RWPE1 (cell line): ENCODE measurements at regions of chr11 and their contacts with region 1.

Region 1: DNA sequence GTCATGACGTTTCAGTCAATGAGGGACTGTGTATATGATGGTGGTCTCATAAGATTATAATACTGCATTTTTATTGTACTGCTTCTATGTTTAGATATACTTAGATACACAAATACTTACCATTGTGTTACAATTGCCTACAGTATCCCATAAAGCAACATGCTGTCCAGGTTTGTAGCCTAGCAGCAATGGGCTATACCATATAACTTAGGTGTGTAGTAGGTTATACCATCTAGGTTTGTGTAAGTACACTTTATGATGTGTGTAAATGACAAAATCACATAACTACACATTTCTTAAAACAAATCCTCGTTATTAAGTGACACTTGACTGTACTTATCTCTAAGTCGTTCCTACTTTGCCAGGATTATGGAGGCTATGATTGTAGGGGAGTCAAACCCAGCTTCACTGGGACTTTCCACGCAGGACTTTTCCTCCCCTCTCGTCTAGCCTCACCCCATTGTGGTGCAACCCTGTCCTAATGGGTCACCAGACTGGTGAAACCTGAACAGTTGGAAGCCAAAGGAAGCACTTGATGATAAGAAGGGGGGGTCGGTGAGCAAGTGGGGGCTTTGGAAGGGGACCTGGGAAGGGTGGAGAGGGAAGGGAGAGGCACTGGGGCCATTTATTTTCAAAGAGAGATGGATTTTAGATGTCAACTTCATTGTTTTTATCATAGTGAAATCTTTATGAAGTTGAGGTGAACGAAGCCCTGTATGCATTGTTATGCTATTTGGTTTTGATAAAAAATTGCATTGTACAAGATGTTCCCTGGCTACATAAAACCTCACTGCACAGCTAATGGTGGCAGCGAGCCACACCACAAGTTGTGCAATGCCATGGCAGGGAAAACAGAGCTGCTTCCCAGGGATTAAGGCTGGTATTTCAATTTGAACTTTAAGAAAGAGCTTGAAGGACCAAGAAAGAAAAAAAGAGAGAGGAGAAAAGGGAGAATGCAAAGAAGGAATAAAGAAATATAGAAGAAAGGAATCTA is 129.1 kb downstream of the EHF start:
- DNase-seq: peak; percentile 74
- H3K27ac ChIP-seq: peak overlapping the region; percentile 97
- CTCF ChIP-seq: no peak

Region 2: GRCh38 chr11:34706709-34707461 is 43.1 kb before region 1 on chr11:
- CTCF ChIA-PET with region 1: no interaction called
- POLR2A ChIA-PET with region 1: no interaction called
- DNase-seq: no peak
- H3K27ac ChIP-seq: no peak overlapping the region
- CTCF ChIP-seq: no peak

Region 3: DNA sequence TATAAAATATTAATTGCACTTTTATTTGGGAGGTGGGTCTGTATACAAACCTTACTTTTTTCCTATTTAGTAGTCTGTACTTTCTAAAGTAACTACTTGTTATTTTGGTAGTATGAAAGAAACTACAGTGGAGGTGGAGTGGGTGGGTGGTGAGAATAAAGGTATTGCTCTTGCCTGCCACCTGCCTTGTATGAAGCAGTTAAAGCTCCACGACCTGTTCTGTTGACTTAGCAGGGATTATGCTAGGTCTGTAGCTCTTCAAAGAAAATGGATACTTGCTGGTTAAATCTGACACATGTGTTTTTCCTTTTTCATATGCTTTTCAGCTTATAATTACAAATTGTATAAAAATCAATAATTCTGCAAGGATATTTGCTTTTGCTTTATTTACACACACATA is 17.1 kb before region 1 on chr11:
- CTCF ChIA-PET with region 1: interaction called, 4 read pairs
- POLR2A ChIA-PET with region 1: interaction called, 11 read pairs
- DNase-seq: no peak
- H3K27ac ChIP-seq: no peak overlapping the region
- CTCF ChIP-seq: no peak

Region 4: GRCh38 chr11:35192347-35192746 is 442.4 kb after region 1 on chr11:
- CTCF ChIA-PET with region 1: interaction called, 10 read pairs
- POLR2A ChIA-PET with region 1: no interaction called
- DNase-seq: no peak
- H3K27ac ChIP-seq: 0 out of 2 replicates have a peak overlapping the region, but pooled peaks have one; percentile 37
- CTCF ChIP-seq: no peak